Left cardiac atrium (tissue), 4 donors: ENCODE measurements at regions of chr12 and their contacts with region 1.

Region 1: DNA sequence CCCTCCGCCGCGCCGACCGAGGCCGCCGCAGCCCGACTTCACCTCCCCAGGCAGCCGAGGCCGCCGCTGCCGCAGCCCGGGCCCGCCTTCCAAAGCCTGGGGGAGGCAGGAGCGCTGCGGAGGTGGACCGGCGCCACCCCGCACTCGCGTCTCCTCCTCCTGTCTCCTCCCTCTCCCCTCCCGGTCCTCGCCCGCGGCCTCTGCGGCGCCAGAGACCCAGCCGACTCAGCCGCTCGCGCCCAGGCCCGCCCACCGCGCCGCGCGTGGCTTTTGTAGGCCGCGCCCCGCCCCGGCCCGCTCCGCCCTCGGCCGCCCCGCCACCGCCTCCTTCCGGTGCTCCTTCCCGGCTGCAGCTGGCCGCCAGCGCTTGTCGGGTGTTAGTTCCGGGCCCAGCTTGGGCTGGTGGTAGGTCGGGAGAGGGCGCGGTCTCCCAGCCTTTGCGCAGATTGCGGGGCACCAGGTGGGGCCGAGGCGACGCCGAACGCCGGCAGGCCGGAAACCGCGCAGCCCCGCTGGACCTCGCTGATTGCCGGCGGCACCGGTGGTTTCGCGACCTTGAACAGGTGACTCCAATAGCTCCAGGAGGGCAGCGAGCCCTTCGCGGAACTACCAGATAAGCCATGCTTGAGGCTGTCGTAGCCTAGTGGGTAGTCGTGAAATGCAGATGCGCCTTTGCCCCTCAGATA is at the start of gene CAPRIN2:
- DNase-seq: peak; percentile 98
- ATAC-seq: peak; percentile 99
- total RNA-seq, gene CAPRIN2: 17.9 to 20.9 TPM

Region 2: DNA sequence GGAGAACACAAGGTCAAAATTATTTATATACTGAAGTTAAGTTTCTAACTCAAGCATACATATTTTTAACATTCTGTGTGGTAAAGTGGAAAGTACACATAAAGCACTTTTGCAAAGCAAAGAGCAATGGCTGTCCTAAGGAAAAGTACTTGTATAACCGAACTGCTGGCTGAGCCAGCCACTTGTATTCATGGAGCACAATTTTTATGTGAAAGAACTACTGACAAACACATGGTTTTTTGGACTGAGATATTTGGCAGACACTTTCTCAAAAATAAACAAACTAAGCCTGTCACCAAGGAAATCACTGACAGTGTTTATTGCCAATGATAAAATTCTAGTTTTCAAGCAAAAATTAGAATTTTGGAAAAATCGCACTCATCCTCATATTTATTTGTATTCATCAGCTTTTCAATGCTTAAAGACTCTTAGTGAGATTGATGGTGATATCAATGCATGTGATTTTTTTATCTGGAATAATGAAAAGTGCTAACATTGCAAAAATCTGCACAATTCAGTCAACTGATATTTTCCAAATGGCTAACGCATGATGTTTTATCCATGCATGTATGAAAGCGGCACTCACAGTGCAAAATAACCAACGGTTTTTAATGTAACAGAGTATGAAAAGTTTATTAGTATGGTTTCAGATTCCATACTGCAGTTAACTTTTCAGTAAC is 184.5 kb before region 1 on chr12:
- intact Hi-C with region 1: no loop called
- DNase-seq: no peak
- ATAC-seq: peak in 1 of 2 donors; percentile 19

Region 3: DNA sequence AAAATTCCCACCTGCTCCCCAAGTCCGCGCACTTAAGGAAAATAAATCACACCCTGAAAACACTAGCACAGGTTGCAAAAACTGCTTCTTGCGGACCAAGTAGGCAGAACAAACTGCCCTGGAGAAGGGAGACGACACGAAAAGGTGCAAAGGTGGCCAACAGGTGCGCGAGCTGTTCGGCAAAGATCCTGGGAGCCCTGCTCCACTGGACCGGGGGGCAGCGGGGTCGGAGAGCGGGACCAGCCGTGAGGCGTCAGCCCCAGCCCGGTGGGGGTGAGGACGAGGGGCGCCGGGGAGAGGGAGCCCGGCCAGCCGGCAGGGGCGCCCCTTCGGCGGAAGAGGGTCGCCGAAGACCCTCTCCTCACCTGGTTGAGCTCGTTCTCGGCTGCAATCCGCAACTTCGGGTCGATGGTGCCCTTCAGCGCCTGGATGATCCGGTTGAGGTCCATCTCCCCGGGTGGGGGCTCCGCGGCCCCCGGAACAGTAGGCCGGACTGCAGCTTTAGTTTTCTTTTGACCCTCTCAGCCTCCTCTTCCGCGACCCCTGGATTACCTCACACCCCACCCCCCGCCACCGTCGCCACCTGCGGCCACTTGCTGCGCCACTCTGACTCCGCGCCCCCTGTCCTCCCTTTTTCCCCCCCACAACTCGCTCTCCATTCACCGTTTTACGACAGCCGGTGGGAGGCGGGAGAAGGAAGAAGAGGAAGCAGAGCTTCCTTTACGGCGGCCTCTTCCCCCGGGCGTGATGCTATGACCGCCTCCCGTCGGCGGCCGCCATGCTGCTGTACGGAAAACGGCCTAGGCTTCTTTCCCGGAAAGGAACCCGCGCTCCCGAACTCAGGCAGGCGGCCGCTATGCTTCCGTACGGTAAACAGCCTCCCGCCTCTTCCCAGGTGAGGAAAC is 59.4 kb before region 1 on chr12 and contains the start of gene IPO8:
- intact Hi-C with region 1: loop called in 1 of 2 experiments (anchors 5 kb)
- DNase-seq: peak; percentile 96
- ATAC-seq: peak; percentile 97
- total RNA-seq, gene IPO8: 21.9 to 28.5 TPM

Region 4: GRCh38 chr12:30806989-30807694 is 52.3 kb after region 1 on chr12:
- intact Hi-C with region 1: loop called in 1 of 2 experiments (anchors 5 kb)
- DNase-seq: peak; percentile 29
- ATAC-seq: peak; percentile 90